BJ (cell line): ENCODE measurements at regions of chr3 and their contacts with region 1.

Region 1: DNA sequence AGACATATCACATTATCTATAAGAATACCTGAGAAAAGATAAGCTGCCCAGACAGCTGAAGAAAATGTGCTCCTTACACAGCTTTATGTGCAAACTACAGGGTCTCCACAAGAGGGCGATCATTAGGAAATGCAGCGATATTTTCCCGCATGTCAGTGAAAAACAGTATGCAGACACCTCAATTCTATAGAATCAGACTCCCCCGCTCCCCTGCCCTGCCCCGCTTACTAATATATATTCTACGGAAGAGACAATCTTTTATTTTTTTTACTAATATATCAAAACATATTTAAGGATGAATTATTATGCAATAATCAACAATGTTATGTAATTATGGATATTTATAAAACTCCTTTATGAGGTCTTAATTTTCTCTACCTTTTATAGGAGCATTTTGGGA is 681.3 kb downstream of the ROBO1 start:
- DNase-seq: no peak
- H3K4me3 ChIP-seq: no peak overlapping the region
- H3K27me3 ChIP-seq: no peaks in the 10 kb centered on the region
- CTCF ChIP-seq: peak; percentile 83

Region 2: DNA sequence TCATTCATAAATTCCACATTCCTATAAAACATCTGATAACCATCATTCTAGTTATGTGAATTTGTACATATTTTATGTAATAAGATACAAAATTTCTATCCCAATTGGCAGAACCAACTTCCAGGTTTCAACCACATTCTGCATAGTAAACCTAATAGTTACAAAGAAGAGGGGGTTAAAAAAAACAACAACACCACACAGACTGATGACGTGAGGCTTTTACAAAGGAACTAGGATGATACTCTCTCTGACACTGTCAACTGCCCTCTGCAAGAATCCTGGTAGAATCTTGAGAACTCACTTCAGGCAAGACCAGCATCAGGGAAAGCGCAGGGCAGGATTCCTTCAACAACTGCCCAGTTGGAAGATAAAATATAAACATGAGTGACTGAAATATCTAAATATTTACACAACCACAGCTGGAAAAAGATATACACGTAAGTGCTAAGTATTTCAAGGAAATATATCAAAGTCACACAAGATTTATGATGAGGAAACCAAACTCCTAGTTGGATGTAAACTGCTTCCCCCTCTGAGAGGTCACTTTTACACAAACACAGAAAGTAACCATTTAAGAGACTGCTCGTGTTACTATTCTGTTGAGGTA is 135.1 kb before region 1 on chr3:
- CTCF ChIA-PET with region 1: no interaction called
- POLR2A ChIA-PET with region 1: no interaction called
- DNase-seq: no peak
- H3K4me3 ChIP-seq: no peak overlapping the region
- H3K27me3 ChIP-seq: no peaks in the 10 kb centered on the region
- CTCF ChIP-seq: no peak

Region 3: DNA sequence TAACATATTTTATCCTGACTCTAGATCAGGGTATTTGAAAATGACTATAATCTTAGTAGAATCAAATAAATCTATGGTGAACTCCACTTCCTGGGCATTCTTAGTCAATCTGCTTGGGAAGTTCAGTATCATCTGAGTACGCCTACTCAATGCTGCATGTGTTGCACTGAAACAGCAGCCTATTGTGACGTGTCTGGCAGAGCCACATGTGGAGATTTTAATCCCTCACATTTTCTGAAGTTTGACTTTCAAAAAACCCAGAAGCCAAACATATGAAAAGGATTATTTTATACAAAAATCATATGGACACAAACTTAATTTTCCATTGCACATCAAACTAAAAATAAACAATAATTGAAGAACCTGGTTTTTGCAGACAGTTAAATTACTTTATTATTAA is 117.0 kb before region 1 on chr3:
- CTCF ChIA-PET with region 1: no interaction called
- POLR2A ChIA-PET with region 1: no interaction called
- DNase-seq: no peak
- H3K4me3 ChIP-seq: no peak overlapping the region
- H3K27me3 ChIP-seq: no peaks in the 10 kb centered on the region
- CTCF ChIP-seq: no peak

Region 4: DNA sequence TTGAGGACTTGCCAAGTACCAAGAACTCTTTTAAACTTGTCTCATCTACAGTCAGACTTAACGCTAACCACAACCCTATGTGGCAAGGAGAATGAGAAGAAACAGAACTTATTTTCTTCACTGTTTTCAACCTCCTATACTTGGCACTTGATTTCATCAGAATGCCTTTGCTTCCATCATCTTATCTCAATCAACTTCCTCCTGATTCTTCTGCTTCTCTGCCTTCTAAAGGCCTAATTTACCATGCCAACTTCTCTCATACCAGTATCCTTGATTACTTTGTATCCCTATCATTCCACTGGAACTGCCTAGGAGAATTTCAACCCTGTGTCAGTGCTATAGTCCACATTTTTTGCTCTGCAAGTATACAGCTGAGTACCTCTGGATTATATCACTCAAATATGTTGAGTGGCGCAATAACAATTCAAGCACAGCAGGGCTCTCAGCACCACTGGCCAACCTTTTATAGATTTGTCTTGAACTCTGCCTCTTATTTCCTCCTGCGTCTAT is 267.7 kb after region 1 on chr3:
- CTCF ChIA-PET with region 1: interaction called, 13 read pairs
- POLR2A ChIA-PET with region 1: no interaction called
- DNase-seq: no peak
- H3K4me3 ChIP-seq: no peak overlapping the region
- H3K27me3 ChIP-seq: no peaks in the 10 kb centered on the region
- CTCF ChIP-seq: no peak

Region 5: GRCh38 chr3:79361748-79362378 is 275.3 kb after region 1 on chr3:
- CTCF ChIA-PET with region 1: interaction called, 121 read pairs
- POLR2A ChIA-PET with region 1: no interaction called
- DNase-seq: no peak
- H3K4me3 ChIP-seq: no peak overlapping the region
- H3K27me3 ChIP-seq: no peaks in the 10 kb centered on the region
- CTCF ChIP-seq: peak; percentile 75